ENCODE measurements at regions of chr7 and their contacts with region 1.

Region 1: DNA sequence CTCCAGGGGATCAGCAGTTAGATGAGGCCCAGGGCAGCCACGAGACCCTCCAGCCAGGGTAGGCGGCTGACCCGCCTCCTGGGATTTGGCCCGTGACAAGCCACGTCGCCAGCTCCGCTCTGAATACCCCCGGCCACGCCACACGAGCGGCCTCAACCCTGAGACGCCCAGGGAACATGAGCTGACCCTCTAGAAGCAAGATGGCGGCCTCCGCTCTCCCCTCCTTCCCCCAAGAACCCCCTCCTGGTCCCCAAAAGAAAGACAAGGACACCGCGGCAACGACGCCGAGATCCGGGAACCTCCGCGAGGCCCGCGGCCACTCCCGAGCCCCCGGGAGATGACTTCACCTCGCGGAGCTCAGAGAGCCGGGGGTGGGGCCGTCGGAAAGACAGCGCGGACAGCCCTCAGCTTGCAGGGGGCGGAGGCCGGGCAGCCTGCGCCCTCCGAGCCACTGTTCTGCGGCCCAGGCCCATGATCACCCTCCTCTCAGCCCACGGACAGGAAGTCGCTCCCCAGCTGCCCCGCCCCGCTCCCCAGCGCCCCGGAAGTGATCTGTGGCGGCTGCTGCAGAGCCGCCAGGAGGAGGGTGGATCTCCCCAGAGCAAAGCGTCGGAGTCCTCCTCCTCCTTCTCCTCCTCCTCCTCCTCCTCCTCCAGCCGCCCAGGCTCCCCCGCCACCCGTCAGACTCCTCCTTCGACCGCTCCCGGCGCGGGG is at the start of gene RALA:
- DNase-seq: peak; percentile 85 to 92
- ATAC-seq: peak; percentile 95 to 98 (median 96)
- H3K4me3 ChIP-seq: peak within 1 kb of the TSS; percentile 79
- H3K4me3 Mint-ChIP-seq: peak within 1 kb of the TSS; percentile 100
- H3K27ac ChIP-seq: peak within 1 kb of the TSS; percentile 91
- H3K27ac Mint-ChIP-seq: peak within 1 kb of the TSS; percentile 87 to 91
- H3K4me1 ChIP-seq: peaks cover 18% of the 10 kb centered on the region
- H3K4me1 Mint-ChIP-seq: peaks cover 41 to 43% of the 10 kb centered on the region in 2 donors
- H3K27me3 ChIP-seq: no peaks in the 10 kb centered on the region
- H3K27me3 Mint-ChIP-seq: no peaks in the 10 kb centered on the region
- CTCF ChIP-seq: no peak
- total RNA-seq, gene RALA: 10.2 to 22.0 (median 16.8) TPM

Region 2: GRCh38 chr7:39633563-39634477 is 10.6 kb after region 1 on chr7:
- intact Hi-C with region 1: no loop called
- DNase-seq: peak in 1 of 2 donors; percentile 77
- ATAC-seq: peak; percentile 45 to 63 (median 52)
- H3K4me3 ChIP-seq: no peak overlapping the region
- H3K4me3 Mint-ChIP-seq: peak overlapping the region; percentile 67
- H3K27ac ChIP-seq: peak overlapping the region; percentile 20
- H3K27ac Mint-ChIP-seq: peak overlapping the region; percentile 78 to 86
- H3K4me1 ChIP-seq: peaks cover 12% of the 10 kb centered on the region
- H3K4me1 Mint-ChIP-seq: peaks cover 57 to 59% of the 10 kb centered on the region in 2 donors
- H3K27me3 ChIP-seq: no peaks in the 10 kb centered on the region
- H3K27me3 Mint-ChIP-seq: no peaks in the 10 kb centered on the region
- CTCF ChIP-seq: no peak

Region 3: DNA sequence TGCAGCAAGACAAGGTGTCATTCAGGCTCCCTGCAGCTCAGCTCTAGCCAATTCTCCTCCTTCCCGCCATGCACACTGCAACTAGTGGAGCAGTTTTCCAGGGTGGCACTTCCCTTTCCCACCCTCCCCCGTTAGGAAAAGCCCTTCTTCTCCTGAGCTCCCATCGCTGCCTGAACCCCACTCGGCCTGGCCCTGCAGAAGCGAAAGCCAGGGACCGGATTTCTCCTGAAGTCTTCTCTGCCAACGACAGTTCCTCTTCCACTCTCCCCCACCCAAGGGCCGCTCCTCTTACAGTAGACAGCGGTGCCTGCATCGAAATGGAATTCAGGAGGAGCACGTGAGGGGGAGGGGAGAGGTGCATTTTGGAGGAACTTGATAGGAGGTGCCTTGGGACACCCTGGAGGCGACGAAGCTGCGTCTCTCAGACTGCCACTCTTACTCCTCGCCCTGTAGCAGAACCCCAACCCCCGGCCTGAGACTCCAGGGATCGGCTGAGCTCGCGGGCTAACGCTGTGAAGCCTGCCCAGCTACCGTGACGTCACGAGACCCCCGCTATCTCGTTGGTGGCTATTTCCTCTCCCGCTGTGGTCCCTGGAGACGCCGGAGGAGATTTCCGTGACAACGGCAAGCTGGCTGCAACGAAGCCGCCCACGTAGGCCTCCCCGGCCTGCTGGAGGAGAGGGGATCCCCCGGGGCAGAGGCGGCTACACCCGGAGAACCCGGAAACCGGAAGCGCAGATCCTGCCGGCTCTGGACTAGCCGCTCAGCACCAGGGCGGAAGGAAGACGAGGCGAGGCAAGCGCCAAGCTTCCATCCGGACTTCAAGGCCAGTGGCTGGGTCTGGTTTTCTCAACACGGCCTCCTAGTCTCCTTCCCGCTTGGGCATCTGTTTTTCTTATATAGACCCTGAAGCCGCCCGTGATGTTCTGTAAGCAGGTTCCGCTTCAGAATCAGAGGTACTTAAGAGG is 109.9 kb after region 1 on chr7:
- intact Hi-C with region 1: loop called (anchors 5 kb)
- DNase-seq: peak; percentile 93 to 98
- ATAC-seq: peak; percentile 88 to 96 (median 96)
- H3K4me3 ChIP-seq: peak overlapping the region; percentile 85
- H3K4me3 Mint-ChIP-seq: peak overlapping the region; percentile 98
- H3K27ac ChIP-seq: peak overlapping the region; percentile 92
- H3K27ac Mint-ChIP-seq: peak overlapping the region; percentile 95 to 99
- H3K4me1 ChIP-seq: peaks cover 33% of the 10 kb centered on the region
- H3K4me1 Mint-ChIP-seq: peaks cover 35 to 41% of the 10 kb centered on the region in 2 donors
- H3K27me3 ChIP-seq: no peaks in the 10 kb centered on the region
- H3K27me3 Mint-ChIP-seq: no peaks in the 10 kb centered on the region
- CTCF ChIP-seq: no peak